WTC11 (cell line): ENCODE measurements at regions of chr22 and their contacts with region 1.

Region 1: GRCh38 chr22:46116491-46116958 is 33.8 kb upstream of the PPARA start:
- DNase-seq: peak; percentile 94
- ATAC-seq: peak; percentile 86
- H3K4me3 Mint-ChIP-seq: no peak overlapping the region
- H3K27ac Mint-ChIP-seq: no peak overlapping the region
- H3K4me1 Mint-ChIP-seq: peaks cover 3% of the 10 kb centered on the region; the same call in 1 of the 2 replicates
- H3K27me3 Mint-ChIP-seq: no peaks in the 10 kb centered on the region
- CTCF ChIP-seq: peak; percentile 49; the same call in 1 of the 2 replicates

Region 2: DNA sequence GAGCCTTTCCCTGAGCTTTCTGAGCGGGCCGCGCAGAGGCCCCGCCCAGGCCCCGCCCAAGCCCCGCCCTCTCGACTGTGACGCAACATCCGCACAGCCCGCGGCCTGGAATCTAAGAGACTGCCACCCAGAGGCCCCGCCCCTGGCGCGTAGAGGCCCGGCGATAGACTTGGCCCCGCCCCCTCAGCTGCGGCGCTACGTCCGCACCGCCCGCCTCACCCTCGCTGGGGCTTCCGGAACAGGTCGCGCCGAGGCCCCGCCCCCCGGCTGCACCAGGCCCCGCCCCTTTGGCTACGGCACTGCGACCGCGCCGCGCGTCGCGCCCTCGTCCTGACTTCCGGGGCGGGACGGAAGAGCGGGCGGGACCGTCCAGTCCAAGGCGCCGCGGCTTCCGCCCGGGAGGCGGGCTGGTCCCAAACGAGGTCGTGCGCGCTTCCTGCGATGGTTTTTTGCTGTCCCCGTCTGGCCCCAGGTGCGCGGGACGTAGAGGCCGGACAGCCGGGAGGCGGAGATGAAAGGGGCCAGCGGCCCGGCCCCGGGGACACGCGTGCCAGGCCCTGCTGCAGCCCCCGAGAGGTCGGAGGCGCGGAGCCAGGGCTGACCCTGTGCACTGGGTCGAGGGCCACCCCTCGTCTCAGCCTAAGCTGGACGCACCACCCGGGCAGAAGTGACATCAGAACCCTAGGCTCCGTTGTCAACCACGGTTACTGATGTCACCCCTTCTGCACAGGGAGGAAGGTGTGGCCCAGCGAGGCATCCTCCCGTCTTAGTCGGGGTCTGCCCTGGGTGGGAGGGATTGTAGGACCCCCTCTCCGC is 80.6 kb before region 1 on chr22:
- CTCF ChIA-PET with region 1: interaction called, 17 read pairs
- POLR2A ChIA-PET with region 1: no interaction called
- DNase-seq: peak; percentile 100
- ATAC-seq: peak; percentile 95
- H3K4me3 Mint-ChIP-seq: peak overlapping the region; percentile 73
- H3K27ac Mint-ChIP-seq: no peak overlapping the region
- H3K4me1 Mint-ChIP-seq: peaks cover 34% of the 10 kb centered on the region
- H3K27me3 Mint-ChIP-seq: no peaks in the 10 kb centered on the region
- CTCF ChIP-seq: no peak

Region 3: DNA sequence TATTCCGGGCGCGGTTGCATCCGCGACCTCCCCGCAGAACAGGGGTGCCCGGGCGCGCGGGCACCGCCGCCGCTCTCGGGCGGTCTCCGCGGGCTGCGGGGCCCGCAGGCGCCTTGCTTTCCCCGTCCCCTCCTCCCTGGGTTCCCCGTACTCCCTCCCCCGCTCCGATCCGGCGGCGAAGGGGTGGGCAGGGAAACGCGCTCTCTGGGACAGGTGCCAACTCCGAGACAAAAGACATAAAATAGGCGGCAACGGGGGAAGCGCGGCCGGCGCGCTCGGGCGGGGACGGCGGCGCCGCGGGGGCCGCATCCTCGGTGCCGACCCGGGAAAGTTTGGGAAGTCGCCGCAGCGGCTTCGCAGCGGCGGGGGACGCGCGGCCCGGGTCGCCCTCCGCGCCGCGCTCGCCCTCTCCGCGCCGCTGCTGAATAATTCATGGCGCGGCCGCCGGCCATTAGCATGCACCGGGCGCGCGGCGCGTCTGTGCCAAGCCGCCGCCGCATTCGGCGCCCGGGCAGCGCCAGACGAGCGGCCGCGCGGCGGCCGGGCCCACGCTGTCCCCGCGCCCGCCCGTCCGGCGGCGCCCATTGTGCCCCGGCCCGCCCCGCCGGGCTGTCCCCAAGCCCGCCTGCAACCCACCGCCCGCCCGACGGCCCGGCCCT is 44.9 kb before region 1 on chr22:
- CTCF ChIA-PET with region 1: interaction called, 15 read pairs
- POLR2A ChIA-PET with region 1: no interaction called
- DNase-seq: peak; percentile 38
- ATAC-seq: peak; percentile 3; the same call in 1 of the 2 replicates
- H3K4me3 Mint-ChIP-seq: peak overlapping the region; percentile 67
- H3K27ac Mint-ChIP-seq: no peak overlapping the region
- H3K4me1 Mint-ChIP-seq: peaks cover 28% of the 10 kb centered on the region
- H3K27me3 Mint-ChIP-seq: peaks cover 67% of the 10 kb centered on the region
- CTCF ChIP-seq: no peak

Region 4: GRCh38 chr22:46079861-46080821 is 36.4 kb before region 1 on chr22:
- CTCF ChIA-PET with region 1: interaction called, 15 read pairs
- POLR2A ChIA-PET with region 1: no interaction called
- DNase-seq: peak; percentile 9
- ATAC-seq: no peak
- H3K4me3 Mint-ChIP-seq: no peak overlapping the region
- H3K27ac Mint-ChIP-seq: no peak overlapping the region
- H3K4me1 Mint-ChIP-seq: peaks cover 30% of the 10 kb centered on the region
- H3K27me3 Mint-ChIP-seq: no peaks in the 10 kb centered on the region
- CTCF ChIP-seq: no peak

Region 5: GRCh38 chr22:46105494-46106278 is 10.8 kb before region 1 on chr22:
- CTCF ChIA-PET with region 1: no interaction called
- POLR2A ChIA-PET with region 1: no interaction called
- DNase-seq: no peak
- ATAC-seq: no peak
- H3K4me3 Mint-ChIP-seq: no peak overlapping the region
- H3K27ac Mint-ChIP-seq: no peak overlapping the region
- H3K4me1 Mint-ChIP-seq: no peaks in the 10 kb centered on the region
- H3K27me3 Mint-ChIP-seq: no peaks in the 10 kb centered on the region
- CTCF ChIP-seq: no peak

Region 6: DNA sequence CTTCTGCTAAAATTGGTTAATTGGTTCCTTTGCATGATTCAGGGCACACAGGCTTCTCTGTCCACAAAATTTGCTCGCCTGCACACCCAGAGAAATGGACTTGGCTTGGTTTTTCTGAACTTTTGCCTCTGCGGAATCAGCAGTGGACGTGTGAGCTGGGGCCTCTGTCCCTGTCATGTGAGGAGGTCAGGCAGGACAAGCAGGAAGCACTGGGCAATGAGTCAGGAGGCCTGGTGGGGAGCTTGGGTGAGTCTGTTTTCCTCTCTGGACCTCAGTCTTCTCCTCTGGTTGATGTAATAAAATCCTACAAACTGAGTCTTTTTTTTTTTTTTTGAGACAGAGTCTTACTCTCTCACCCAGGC is 431.3 kb after region 1 on chr22:
- CTCF ChIA-PET with region 1: no interaction called
- POLR2A ChIA-PET with region 1: no interaction called
- DNase-seq: no peak
- ATAC-seq: no peak
- H3K4me3 Mint-ChIP-seq: no peak overlapping the region
- H3K27ac Mint-ChIP-seq: no peak overlapping the region
- H3K4me1 Mint-ChIP-seq: no peaks in the 10 kb centered on the region
- H3K27me3 Mint-ChIP-seq: peaks cover 6% of the 10 kb centered on the region
- CTCF ChIP-seq: no peak